MCF 10A (cell line): ENCODE measurements at regions of chr1 and their contacts with region 1.

Region 1: DNA sequence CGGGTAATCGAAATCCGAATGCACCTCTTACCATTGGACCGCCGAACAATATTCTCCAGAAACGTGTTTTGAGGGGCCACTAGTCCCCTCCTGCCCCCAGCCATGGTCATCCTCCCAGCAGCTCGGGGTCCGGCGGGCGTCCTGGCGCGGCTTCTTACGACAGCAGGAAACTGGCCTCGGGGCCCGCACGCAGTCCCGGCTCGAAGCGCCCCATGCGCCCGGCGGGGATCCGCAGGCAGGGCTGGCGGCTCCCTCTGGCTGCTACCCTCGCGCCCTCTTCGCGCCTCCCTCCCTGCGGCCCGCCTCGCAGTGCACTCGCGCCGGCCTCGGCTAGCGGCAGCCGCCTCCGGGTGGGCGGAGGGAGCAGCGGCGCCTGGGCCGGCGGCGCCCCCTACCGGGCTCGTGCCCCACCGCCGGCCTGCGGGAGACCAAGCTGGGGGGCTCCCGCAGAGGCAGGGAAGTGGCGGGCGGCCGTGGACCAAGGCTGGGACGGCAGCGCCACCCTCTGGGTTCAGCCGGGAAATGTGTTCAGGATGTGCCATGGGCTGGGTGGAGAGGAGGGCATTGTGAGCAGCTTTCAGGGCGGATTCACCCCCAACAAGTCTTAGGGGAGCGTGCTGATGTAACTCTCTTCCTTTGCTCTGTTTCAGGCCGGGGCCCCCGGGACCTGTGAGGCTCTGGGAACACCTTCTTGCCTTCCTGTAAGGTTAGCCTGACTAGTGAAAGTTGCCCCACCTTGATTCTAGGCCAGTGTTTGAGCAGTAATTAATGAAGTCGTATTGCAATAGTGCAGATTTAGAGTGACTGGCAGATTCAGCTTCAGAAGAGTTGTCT is at the start of gene KCNH1:
- DNase-seq: peak; percentile 81
- H3K4me3 Mint-ChIP-seq: peak within 1 kb of the TSS; percentile 43
- H3K27ac Mint-ChIP-seq: no peak within 1 kb of the TSS
- H3K4me1 Mint-ChIP-seq: no peaks in the 10 kb centered on the region
- H3K27me3 Mint-ChIP-seq: peaks cover 55% of the 10 kb centered on the region
- CTCF ChIP-seq: peak; percentile 100
- total RNA-seq, gene KCNH1: 0.17 and 0.19 TPM in 2 replicates

Region 2: GRCh38 chr1:210407207-210407886 is 726.7 kb before region 1 on chr1:
- CTCF ChIA-PET with region 1: interaction called, 159 read pairs
- POLR2A ChIA-PET with region 1: no interaction called
- intact Hi-C with region 1: loop called (anchors 1 kb)
- DNase-seq: peak; percentile 84
- H3K4me3 Mint-ChIP-seq: no peak overlapping the region
- H3K27ac Mint-ChIP-seq: no peak overlapping the region
- H3K4me1 Mint-ChIP-seq: no peaks in the 10 kb centered on the region
- H3K27me3 Mint-ChIP-seq: no peaks in the 10 kb centered on the region
- CTCF ChIP-seq: peak; percentile 100

Region 3: DNA sequence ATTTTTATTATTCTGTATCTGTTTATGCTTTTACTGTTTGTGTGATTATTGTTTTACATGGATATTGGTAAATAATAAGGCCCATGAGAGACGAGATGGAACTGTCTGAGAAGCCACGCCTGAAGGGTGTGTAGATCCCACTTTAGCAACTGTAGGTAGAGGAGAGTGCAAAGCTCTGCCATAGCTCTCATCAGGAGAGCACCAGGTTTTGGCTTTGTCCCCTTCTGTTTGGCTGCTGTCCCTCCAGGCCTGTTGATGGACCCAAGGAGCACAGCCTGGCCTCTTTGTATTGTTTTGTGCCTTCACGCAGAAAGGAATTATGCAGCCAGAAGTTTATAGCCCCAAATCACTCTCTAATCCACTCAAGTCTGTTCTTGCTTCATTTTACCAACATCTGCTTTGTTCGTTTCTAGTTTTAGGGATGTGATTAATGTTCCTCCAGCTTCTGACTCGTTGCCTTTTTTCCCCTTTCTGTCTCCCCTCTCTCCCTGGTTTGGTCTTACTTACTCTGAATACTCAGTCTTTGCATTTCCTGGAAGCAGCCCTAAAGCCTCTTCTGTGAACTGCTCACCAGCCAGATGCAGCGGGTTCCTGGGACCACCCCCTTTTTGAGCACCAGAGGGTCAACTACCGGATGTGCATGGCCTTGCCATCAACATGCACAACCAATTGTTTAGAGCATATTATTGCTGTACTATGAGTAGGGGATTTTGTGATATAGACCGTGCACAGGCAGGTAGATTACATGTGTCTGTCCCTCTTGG is 678.0 kb before region 1 on chr1:
- CTCF ChIA-PET with region 1: interaction called, 175 read pairs
- POLR2A ChIA-PET with region 1: no interaction called
- intact Hi-C with region 1: no loop called
- DNase-seq: no peak
- H3K4me3 Mint-ChIP-seq: no peak overlapping the region
- H3K27ac Mint-ChIP-seq: no peak overlapping the region
- H3K4me1 Mint-ChIP-seq: no peaks in the 10 kb centered on the region
- H3K27me3 Mint-ChIP-seq: peaks cover 68% of the 10 kb centered on the region
- CTCF ChIP-seq: no peak

Region 4: DNA sequence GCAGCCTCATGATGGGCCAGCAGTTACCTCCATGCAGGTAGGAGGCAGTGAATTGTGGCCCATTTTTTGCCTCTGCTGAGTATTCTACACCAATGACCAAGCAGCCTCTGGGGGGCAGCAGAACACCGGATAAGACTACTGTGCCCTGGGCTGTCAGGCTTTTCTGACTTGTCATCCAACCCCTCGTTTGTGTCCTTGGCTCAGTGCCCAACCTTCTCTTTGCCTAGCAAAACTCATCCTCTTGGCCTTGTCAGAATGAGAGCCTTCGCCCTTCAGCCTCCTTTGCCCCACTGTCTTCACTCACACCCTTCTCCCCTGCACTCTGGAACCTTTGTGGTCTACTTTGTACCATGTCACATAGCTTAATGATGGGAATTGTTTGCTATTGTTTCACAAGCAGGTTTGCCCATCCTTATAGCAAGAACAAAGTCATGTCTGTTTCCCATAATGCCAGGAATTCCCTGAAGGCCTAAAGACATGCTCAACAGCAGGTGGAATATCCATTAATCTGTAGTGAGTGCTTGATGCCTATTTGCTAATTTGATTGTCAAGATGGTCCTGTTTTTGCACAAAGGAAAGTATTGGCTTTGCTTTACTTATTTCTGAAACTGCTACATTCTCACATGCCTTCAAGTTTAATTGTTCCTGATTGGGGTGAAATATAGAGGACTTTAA is 549.5 kb before region 1 on chr1:
- CTCF ChIA-PET with region 1: interaction called, 365 read pairs
- POLR2A ChIA-PET with region 1: no interaction called
- intact Hi-C with region 1: loop called (anchors 1 kb)
- DNase-seq: peak; percentile 97
- H3K4me3 Mint-ChIP-seq: no peak overlapping the region
- H3K27ac Mint-ChIP-seq: no peak overlapping the region
- H3K4me1 Mint-ChIP-seq: peaks cover 6% of the 10 kb centered on the region
- H3K27me3 Mint-ChIP-seq: no peaks in the 10 kb centered on the region
- CTCF ChIP-seq: peak; percentile 100

Region 5: GRCh38 chr1:211118407-211119102 is 15.5 kb before region 1 on chr1:
- CTCF ChIA-PET with region 1: interaction called, 20 read pairs
- POLR2A ChIA-PET with region 1: interaction called, 5 read pairs
- intact Hi-C with region 1: no loop called
- DNase-seq: peak; percentile 60
- H3K4me3 Mint-ChIP-seq: no peak overlapping the region
- H3K27ac Mint-ChIP-seq: no peak overlapping the region
- H3K4me1 Mint-ChIP-seq: peaks cover 12% of the 10 kb centered on the region
- H3K27me3 Mint-ChIP-seq: peaks cover 9% of the 10 kb centered on the region
- CTCF ChIP-seq: no peak

Region 6: DNA sequence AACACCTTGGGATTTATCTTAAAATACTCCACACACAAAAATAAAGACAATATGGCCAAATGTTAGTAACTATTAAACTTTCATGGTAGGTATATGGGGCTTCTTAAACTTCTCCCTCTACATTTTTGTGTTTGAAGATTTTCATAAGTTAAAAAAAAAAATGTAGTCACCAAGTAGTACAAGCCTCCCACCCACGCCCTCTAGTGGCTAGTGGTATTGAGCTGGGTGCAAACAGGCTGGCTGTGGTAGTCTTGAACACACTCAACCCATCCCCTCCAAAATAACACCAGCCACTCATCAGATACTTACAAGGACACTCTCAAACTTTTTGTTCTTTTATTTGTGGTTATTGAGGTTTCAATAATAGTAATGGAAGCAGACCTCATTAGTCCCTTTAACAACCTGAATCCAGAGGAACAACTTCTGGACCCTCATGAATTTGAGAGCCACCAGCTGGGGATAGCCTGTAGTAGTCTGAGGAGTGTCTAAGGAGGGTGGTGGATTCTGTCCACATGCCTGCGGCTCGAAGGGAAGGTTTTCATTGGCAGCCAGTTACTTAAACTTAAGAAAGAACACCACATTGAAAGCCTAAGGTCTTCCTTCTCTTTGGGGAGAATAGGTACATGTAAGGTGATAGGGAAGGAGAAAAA is 342.3 kb after region 1 on chr1:
- CTCF ChIA-PET with region 1: no interaction called
- POLR2A ChIA-PET with region 1: no interaction called
- intact Hi-C with region 1: loop called (anchors 10 kb)
- DNase-seq: peak; percentile 93
- H3K4me3 Mint-ChIP-seq: no peak overlapping the region
- H3K27ac Mint-ChIP-seq: no peak overlapping the region
- H3K4me1 Mint-ChIP-seq: peaks cover 8% of the 10 kb centered on the region
- H3K27me3 Mint-ChIP-seq: no peaks in the 10 kb centered on the region
- CTCF ChIP-seq: peak; percentile 98